ENCODE measurements at regions of chr18 and their contacts with region 1.

Region 1: DNA sequence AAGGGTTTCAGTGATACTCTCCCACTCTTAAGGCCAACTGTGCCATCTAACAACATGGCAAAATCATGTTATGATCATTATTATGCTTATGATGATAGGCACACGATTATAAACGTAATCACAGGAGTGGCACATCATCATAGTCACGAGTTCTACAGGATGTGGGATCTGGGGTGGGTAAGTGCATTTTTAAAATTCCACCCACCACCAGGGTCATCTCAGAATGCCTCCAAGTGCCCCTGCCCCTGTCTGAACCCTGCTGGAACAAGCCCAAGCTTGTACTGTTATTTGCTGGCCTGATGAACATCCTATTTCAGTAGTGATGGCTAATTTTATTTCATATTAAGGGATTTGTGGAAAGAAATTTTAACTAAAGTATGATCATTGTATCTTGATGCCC is 117.9 kb downstream of the PTPRM start:
- DNase-seq: no peak
- ATAC-seq: no peak
- H3K4me3 ChIP-seq: no peak overlapping the region
- H3K27ac ChIP-seq: peak overlapping the region in 9 of 12 donors; percentile 22 to 69 (median 50)
- H3K4me1 ChIP-seq: peaks cover 0 to 86% (median 42%) of the 10 kb centered on the region in 12 donors
- H3K27me3 ChIP-seq: no peaks in the 10 kb centered on the region
- CTCF ChIP-seq: no peak
- POLR2A ChIP-seq: no peak

Region 2: DNA sequence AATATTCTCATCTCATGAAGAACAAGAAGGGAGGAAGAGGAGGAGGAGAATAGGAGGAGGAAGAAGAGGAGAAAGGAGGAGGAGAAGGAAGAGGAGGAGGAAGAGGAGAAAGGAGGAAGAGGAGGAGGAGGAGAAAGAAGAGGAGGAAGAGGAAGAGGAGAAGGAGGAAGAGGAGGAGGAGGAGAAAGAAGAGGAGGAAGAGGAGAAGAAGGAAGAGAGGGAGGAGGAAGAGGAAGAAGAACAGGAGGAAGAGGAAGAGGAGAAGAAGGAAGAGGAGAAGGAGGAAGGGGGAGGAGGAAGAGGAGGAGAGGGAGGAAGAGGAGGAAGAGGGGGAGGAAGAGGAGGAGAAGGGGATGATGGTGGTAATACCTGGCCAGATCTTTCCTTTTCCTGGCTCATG is 187.9 kb before region 1 on chr18:
- intact Hi-C with region 1: no loop called
- DNase-seq: no peak
- ATAC-seq: no peak
- H3K4me3 ChIP-seq: no peak overlapping the region
- H3K27ac ChIP-seq: no peak overlapping the region
- H3K4me1 ChIP-seq: no peaks in the 10 kb centered on the region
- H3K27me3 ChIP-seq: no peaks in the 10 kb centered on the region
- CTCF ChIP-seq: no peak
- POLR2A ChIP-seq: no peak

Region 3: DNA sequence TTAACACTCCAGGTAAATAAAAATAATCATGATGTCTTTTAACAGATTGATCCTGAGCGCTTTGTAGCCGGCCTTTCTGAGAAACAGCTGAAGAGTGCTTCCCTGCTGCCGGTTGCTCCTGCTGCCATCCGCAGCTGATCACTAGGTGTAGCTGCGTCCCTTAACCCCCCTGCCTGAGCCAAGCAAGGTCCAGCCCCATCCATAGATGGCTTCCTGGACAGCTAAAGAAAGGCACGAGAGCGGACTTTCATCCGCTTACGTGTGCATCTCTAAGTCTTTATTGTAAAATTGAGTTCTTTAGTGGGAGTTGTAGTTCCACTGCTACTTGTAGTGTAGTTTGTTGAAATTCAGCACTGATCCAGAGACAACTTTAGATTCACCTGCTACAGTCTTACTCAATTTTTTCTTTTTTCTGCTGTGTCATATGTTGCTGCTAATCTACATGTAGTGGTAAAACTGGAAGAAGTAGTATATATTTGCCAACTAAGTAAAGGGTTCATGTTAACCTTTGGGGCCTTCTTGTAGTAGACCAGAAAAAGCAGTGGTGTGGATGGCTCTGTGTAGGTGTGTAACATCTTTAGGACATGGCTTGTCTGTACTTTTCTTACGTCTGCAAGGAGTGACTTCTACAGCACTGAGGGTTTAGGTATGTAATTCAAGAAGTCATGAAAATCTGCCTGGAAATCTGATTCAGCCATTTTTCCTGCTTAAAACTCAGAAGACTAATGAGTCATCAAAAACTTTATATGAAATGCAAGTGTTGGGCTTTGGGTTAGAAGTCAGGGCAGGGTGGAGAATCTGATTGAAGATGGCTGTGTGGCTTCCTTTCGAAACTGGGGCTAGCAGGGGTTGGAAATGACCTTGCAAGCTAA is 109.6 kb before region 1 on chr18:
- intact Hi-C with region 1: no loop called
- DNase-seq: peak in 2 of 5 donors; percentile 42 to 52
- ATAC-seq: peak; percentile 51 to 88 (median 72)
- H3K4me3 ChIP-seq: no peak overlapping the region
- H3K27ac ChIP-seq: peak overlapping the region in 3 of 12 donors; percentile 13 to 51 (median 25)
- H3K4me1 ChIP-seq: peaks cover 4 to 84% (median 53%) of the 10 kb centered on the region in 12 donors
- H3K27me3 ChIP-seq: no peaks in the 10 kb centered on the region
- CTCF ChIP-seq: peak in 9 of 12 donors; percentile 12 to 50 (median 25)
- POLR2A ChIP-seq: no peak

Region 4: DNA sequence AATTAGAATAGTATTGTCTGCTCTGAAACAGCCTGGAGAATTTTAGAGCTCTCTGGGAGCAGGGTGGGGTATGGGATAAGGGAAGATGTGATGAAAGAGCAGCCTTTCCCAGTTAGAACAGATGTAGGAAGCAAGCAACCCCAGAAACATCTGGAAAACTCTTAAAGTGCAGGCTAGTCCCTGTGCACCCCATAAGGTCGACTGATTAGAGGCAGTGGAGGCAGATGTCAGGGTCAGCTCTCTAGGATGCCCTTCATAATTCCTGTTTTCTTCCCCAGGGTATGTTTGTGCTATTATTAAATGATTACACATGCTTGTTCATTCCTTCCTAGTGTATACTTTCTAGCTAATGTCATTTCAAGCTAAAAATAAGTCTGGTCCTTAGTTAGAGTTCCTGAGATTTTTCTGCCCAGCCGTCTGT is 76.2 kb before region 1 on chr18:
- intact Hi-C with region 1: loop called in 1 of 10 experiments (anchors 5 kb)
- DNase-seq: peak in 3 of 5 donors; percentile 36 to 50 (median 39)
- ATAC-seq: peak; percentile 75 to 88 (median 80)
- H3K4me3 ChIP-seq: no peak overlapping the region
- H3K27ac ChIP-seq: peak overlapping the region; percentile 77 to 94 (median 87)
- H3K4me1 ChIP-seq: peaks cover 3 to 96% (median 64%) of the 10 kb centered on the region in 12 donors
- H3K27me3 ChIP-seq: no peaks in the 10 kb centered on the region
- CTCF ChIP-seq: no peak
- POLR2A ChIP-seq: no peak

Region 5: DNA sequence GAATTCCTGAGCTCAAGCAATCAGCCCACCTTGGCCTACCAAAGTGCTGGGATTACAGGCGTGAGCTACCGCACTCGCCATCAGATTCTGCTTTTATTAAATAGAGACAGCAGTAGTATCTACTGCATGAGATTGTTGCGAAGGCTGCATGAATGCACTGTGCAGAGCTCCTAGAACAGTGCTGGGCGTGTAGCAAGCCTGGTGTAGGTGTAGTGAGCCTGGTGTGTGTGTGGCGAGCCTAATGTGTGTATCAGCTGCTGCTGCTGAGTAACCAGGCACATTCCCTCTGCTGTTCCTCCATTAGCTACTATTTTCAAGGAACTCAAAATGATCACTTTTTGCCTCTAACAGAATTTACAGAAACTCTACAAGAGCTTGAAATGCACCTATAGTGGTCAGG is 60.3 kb before region 1 on chr18:
- intact Hi-C with region 1: loop called in 1 of 10 experiments (anchors 2 kb)
- DNase-seq: no peak
- ATAC-seq: no peak
- H3K4me3 ChIP-seq: no peak overlapping the region
- H3K27ac ChIP-seq: peak overlapping the region in 1 of 12 donors; percentile 2
- H3K4me1 ChIP-seq: peaks cover 18 to 93% (median 57%) of the 10 kb centered on the region in 12 donors
- H3K27me3 ChIP-seq: no peaks in the 10 kb centered on the region
- CTCF ChIP-seq: no peak
- POLR2A ChIP-seq: no peak